ENCODE measurements at regions of chr19 and their contacts with region 1.

Region 1: DNA sequence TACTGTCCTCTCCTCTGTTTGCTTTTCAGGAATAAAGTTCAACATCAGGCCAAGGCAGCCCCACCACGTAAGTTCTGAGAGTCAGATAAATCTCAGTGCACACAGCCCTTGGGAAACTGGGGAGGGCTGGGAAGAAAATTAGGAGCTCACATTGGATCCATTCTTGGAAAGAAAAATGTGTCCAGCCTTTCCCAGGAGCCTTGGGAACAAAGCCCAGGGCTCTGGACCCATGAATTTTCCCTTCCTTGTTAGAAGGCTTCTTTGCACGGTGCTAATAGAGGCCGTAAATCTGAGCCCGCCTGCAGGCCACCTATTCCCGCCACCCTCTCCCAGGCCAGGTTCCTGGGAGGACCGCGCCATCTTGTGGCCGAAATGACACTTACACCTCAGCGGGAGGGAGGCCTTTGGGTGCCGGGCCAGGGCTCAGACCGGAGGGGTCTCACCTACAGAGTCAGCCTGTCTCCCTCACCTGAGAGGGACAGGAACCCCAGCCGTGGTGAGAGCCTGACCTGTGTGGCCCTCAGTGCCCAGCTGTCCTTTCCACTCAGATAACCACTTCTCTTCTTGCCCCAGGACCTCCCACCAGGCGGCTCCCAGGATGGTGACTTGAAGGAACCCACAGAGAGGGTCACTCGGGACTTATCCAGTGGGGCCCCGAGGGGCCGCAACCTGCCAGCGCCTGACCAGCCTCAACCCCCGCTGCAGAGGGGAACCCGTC is 25.1 kb upstream of the KCTD15 start:
- DNase-seq: peak; percentile 71

Region 2: DNA sequence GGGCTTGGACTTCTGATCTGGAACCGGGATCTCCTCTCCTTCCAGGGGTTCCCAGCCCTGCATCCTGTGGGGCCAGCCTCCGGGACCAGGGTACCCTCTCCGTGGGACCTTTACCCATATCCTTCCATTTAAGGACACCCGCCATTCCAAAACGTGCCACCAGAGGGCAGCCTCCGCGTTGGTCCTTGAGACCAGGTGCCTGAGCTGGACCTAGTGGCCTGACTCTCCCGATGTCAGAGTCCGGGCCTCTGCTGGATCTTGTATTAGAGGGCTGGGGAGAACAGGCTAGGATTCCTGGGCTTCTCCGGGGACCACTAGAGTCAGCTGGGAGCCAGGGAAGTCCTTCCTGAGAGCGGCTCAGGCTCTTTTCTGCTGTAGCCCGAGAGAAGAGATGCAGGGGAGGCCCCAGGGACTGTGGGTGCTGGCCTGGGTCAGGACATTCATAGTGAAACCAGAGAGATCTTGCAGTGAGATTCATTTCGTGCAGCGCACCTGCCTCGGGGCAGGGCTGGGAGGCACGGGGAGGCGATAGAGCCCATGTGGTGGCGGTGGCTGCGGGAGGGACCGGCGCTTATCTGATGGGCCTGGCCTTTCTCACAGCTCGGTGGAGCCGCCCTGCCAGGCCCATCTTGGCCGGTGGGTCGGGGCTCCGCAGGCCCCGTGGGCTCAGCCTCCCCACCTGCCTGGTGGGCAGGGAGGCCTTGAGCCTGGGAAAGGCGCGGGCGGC is 536.1 kb before region 1 on chr19:
- in situ Hi-C with region 1: loop called (anchors 25 kb)
- DNase-seq: peak; percentile 66

Region 3: GRCh38 chr19:33430674-33431277 is 340.8 kb before region 1 on chr19:
- in situ Hi-C with region 1: loop called (anchors 25 kb)
- DNase-seq: peak; percentile 71

Region 4: DNA sequence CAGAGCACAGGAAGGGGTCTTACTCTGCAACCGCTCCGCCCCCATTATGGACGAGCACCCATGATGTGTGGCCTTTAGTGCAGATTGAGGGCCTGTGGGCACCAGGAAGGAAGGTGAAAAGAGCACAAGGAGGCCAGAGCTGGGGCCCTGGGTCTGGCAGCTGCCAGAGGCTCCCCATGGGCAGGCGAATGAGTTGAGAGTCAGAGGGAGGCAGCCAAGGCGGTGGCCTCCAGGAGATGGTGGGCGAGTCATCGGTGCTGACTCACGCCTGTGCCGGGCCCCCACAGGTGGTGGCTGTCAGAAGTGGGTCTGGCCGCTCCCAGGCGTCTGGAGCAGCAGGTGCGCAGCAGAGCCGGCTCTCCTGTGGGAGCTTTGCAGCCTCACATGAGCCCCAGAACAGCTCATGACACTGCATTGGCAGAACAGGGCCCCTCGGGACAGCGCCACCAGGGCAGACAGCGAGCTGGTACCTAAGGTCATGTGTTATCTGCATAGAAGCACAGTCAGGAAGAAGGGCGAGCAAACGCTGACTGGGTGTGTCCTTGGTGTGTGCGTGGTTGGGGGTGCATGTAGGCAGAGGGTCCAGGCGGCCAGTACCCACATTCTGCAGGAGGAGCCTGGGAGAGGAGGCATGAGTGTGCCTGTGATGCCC is 81.0 kb before region 1 on chr19:
- in situ Hi-C with region 1: no loop called
- DNase-seq: no peak

Region 5: DNA sequence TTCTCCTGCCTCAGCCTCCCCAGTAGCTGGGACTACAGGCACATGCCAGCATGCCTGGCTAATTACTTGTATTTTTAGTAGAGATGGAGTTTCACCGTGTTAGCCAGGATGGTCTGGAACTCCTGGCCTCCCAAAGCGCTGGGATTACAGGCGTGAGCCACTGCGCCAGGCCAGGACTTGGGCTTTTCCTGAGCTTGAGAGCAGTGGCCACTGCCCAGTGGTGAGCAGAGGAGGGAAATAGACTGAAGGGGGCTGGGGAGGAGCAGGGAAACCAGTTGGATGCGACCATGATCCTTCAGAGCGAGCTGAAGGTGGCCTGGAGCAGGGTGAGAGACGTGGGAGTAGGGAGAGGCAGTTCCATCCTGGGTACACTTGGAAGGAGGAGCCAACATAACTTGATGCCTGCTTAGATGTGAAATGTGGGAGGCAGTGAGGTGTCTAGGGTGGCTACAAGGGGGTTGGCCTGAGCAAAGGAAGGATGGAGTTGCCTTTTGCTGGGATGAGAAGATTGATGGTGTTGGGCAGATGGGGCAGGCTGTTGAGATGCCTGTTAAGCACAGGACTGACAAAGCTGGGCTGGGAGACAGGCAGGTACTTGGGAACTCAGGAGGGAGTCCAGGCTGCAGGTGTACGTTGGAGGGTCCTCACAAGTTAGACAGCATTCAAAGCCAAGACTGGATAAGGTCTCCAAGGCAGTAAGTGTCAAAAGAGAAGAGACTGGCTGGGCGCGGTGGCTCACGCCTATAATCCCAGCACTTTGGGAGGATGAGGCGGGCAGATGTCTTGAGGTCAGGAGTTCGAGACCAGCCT is 56.9 kb after region 1 on chr19:
- in situ Hi-C with region 1: no loop called
- DNase-seq: no peak

Measured in KBM-7 (cell line).